ENCODE measurements at regions of chr17 and their contacts with region 1.

Region 1: GRCh38 chr17:73267648-73268537 is 6.2 kb upstream of the CPSF4L start:
- DNase-seq: no peak
- H3K4me3 ChIP-seq: no peak overlapping the region
- CTCF ChIP-seq: no peak

Region 2: DNA sequence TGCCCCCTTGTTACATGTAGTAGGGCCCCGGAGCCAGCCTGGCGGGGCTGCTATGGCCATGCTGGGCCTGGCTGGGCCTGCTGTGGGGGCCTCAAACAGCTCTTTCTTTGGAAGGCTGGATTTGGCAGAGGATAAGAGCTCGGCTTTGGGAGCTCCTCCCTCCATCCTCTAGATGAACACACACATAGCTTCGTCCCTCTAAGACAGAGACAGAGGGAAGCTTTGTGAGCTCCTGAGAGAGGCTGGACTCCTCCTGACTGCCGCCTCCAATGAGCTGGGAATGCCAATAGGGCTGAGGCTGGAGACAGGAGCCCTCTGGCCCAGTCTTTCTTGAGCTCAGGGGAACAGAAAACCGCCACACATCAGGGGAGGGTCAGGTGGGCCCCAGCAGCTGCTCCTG is 81.2 kb after region 1 on chr17:
- in situ Hi-C with region 1: loop called (anchors 5 kb)
- DNase-seq: no peak
- H3K4me3 ChIP-seq: no peak overlapping the region
- CTCF ChIP-seq: no peak

Measured in astrocyte of the cerebellum (primary cell).